GM12878 (cell line): ENCODE measurements at regions of chr18 and their contacts with region 1.

Region 1: GRCh38 chr18:42114310-42114943 is 159.4 kb downstream of the PIK3C3 start:
- DNase-seq: peak; percentile 42
- ATAC-seq: peak; percentile 96
- H3K4me3 ChIP-seq: no peak overlapping the region
- H3K27ac ChIP-seq: no peak overlapping the region; the same call in 1 of the 2 replicates
- H3K4me1 ChIP-seq: peaks cover 11% of the 10 kb centered on the region
- H3K27me3 ChIP-seq: no peaks in the 10 kb centered on the region
- CTCF ChIP-seq: peak; percentile 77 to 93 (median 84)
- EP300 ChIP-seq: no peak
- POLR2A ChIP-seq: no peak
- RAD21 ChIP-seq: peak; percentile 99

Region 2: GRCh38 chr18:42053188-42053781 is 61.1 kb before region 1 on chr18:
- CTCF ChIA-PET with region 1: interaction called, 80 read pairs
- POLR2A ChIA-PET with region 1: no interaction called
- RAD21 ChIA-PET with region 1: interaction called, 40 read pairs
- SMC1A ChIA-PET with region 1: interaction called, 46 read pairs
- in situ Hi-C with region 1: no loop called
- intact Hi-C with region 1: loop called (anchors 1 kb)
- DNase-seq: peak; percentile 4
- ATAC-seq: peak; percentile 95
- H3K4me3 ChIP-seq: no peak overlapping the region
- H3K27ac ChIP-seq: no peak overlapping the region
- H3K4me1 ChIP-seq: no peaks in the 10 kb centered on the region
- H3K27me3 ChIP-seq: no peaks in the 10 kb centered on the region
- CTCF ChIP-seq: peak; percentile 68 to 80 (median 76)
- EP300 ChIP-seq: no peak
- POLR2A ChIP-seq: no peak
- RAD21 ChIP-seq: peak; percentile 60

Region 3: GRCh38 chr18:42157878-42158277 is 43.5 kb after region 1 on chr18:
- CTCF ChIA-PET with region 1: interaction called, 5 read pairs
- POLR2A ChIA-PET with region 1: no interaction called
- RAD21 ChIA-PET with region 1: interaction called, 5 read pairs
- SMC1A ChIA-PET with region 1: interaction called, 10 read pairs
- in situ Hi-C with region 1: no loop called
- intact Hi-C with region 1: no loop called
- DNase-seq: no peak
- ATAC-seq: no peak
- H3K4me3 ChIP-seq: no peak overlapping the region
- H3K27ac ChIP-seq: no peak overlapping the region
- H3K4me1 ChIP-seq: no peaks in the 10 kb centered on the region
- H3K27me3 ChIP-seq: no peaks in the 10 kb centered on the region
- CTCF ChIP-seq: no peak
- EP300 ChIP-seq: no peak
- POLR2A ChIP-seq: no peak
- RAD21 ChIP-seq: no peak

Region 4: DNA sequence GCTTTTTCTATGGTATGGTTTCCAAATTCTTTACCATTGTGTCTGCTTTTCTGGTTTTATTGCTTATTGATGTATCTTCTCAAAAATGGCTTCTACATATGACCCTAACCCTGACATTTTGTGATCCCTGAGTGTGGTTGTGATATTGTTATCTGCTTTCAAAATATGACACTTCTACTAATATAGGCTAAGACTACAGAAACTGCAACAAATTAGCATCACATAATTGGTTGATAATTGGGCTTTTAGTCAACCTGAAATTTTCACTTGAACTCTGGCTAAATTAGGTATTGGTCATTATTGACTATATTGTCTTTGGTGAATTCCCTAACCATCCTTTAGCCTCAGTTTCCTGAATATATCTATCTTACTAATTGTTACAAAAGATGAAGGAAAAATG is 86.7 kb after region 1 on chr18:
- CTCF ChIA-PET with region 1: interaction called, 6 read pairs
- POLR2A ChIA-PET with region 1: no interaction called
- RAD21 ChIA-PET with region 1: interaction called, 3 read pairs
- SMC1A ChIA-PET with region 1: interaction called, 10 read pairs
- in situ Hi-C with region 1: no loop called
- intact Hi-C with region 1: no loop called
- DNase-seq: no peak
- ATAC-seq: peak; percentile 54
- H3K4me3 ChIP-seq: no peak overlapping the region
- H3K27ac ChIP-seq: no peak overlapping the region
- H3K4me1 ChIP-seq: no peaks in the 10 kb centered on the region
- H3K27me3 ChIP-seq: no peaks in the 10 kb centered on the region
- CTCF ChIP-seq: no peak
- EP300 ChIP-seq: 0 out of 4 replicates have a peak, but pooled peaks of 1 of the 2 experiments have one; percentile 11
- POLR2A ChIP-seq: no peak
- RAD21 ChIP-seq: no peak

Region 5: GRCh38 chr18:42274488-42275137 is 160.2 kb after region 1 on chr18:
- CTCF ChIA-PET with region 1: interaction called, 204 read pairs
- POLR2A ChIA-PET with region 1: interaction called, 4 read pairs
- RAD21 ChIA-PET with region 1: interaction called, 115 read pairs
- SMC1A ChIA-PET with region 1: interaction called, 191 read pairs
- in situ Hi-C with region 1: no loop called
- intact Hi-C with region 1: loop called (anchors 1 kb)
- DNase-seq: no peak
- ATAC-seq: peak; percentile 92
- H3K4me3 ChIP-seq: no peak overlapping the region
- H3K27ac ChIP-seq: no peak overlapping the region
- H3K4me1 ChIP-seq: no peaks in the 10 kb centered on the region
- H3K27me3 ChIP-seq: no peaks in the 10 kb centered on the region
- CTCF ChIP-seq: peak; percentile 19 to 47 (median 24); a peak in 3 of 6 replicates
- EP300 ChIP-seq: no peak
- POLR2A ChIP-seq: no peak
- RAD21 ChIP-seq: peak; percentile 36; the same call in 1 of the 2 replicates

Region 6: DNA sequence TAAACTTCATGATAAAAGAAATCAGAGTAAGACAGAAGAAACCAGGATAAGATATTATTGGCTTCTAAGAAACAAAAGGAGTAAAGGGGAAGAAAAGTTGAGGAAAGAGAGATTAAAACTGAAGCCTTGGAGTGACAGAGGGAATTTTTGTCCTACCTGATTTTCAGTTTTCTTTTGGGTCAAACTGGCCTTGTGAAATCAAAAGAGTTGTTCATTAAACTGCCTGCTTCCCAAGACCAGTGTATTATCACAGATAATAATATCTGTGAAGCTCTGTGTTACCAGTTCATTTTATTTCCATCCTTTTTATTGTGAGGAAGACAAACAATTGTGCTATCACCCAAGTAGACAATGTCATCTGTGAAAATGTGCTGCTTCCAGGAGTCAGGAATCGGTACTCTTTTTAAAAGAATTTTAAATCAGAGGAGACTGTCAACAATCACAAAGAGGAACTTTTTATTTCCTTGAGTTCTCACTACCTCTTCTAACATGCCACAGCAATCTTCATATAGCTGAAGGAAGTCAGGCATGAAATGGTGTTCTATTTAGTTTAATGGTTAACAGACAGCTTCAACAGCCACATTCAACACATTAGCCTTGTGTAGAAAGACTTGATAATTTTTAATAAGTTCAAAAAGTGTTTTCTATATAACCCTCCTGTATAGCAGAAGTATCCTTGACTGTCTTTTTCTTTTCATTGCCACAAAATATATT is 395.4 kb after region 1 on chr18:
- CTCF ChIA-PET with region 1: interaction called, 6 read pairs
- POLR2A ChIA-PET with region 1: no interaction called
- RAD21 ChIA-PET with region 1: interaction called, 12 read pairs
- SMC1A ChIA-PET with region 1: interaction called, 3 read pairs
- in situ Hi-C with region 1: no loop called
- intact Hi-C with region 1: loop called (anchors 10 kb)
- DNase-seq: peak; percentile 23
- ATAC-seq: peak; percentile 92
- H3K4me3 ChIP-seq: no peak overlapping the region
- H3K27ac ChIP-seq: no peak overlapping the region
- H3K4me1 ChIP-seq: no peaks in the 10 kb centered on the region
- H3K27me3 ChIP-seq: no peaks in the 10 kb centered on the region
- CTCF ChIP-seq: no peak
- EP300 ChIP-seq: peak in 1 of 2 experiments; percentile 37; a peak in 1 of 4 replicates
- POLR2A ChIP-seq: no peak
- RAD21 ChIP-seq: no peak

Region 7: GRCh38 chr18:42644729-42645131 is 530.3 kb after region 1 on chr18:
- CTCF ChIA-PET with region 1: no interaction called
- POLR2A ChIA-PET with region 1: no interaction called
- RAD21 ChIA-PET with region 1: no interaction called
- SMC1A ChIA-PET with region 1: no interaction called
- in situ Hi-C with region 1: no loop called
- intact Hi-C with region 1: no loop called
- DNase-seq: no peak
- ATAC-seq: no peak
- H3K4me3 ChIP-seq: no peak overlapping the region
- H3K27ac ChIP-seq: no peak overlapping the region
- H3K4me1 ChIP-seq: no peaks in the 10 kb centered on the region
- H3K27me3 ChIP-seq: no peaks in the 10 kb centered on the region
- CTCF ChIP-seq: no peak
- EP300 ChIP-seq: no peak
- POLR2A ChIP-seq: no peak
- RAD21 ChIP-seq: no peak

Region 8: GRCh38 chr18:43571078-43571689 is 1456.8 kb after region 1 on chr18:
- CTCF ChIA-PET with region 1: no interaction called
- POLR2A ChIA-PET with region 1: no interaction called
- RAD21 ChIA-PET with region 1: no interaction called
- SMC1A ChIA-PET with region 1: no interaction called
- in situ Hi-C with region 1: loop called (anchors 25 kb)
- intact Hi-C with region 1: no loop called
- DNase-seq: no peak
- ATAC-seq: peak; percentile 74
- H3K4me3 ChIP-seq: no peak overlapping the region
- H3K27ac ChIP-seq: no peak overlapping the region
- H3K4me1 ChIP-seq: no peaks in the 10 kb centered on the region
- H3K27me3 ChIP-seq: no peaks in the 10 kb centered on the region
- CTCF ChIP-seq: peak; percentile 61 to 70 (median 64)
- EP300 ChIP-seq: no peak
- POLR2A ChIP-seq: no peak
- RAD21 ChIP-seq: peak; percentile 78